Heart right ventricle (tissue), 16 donors: ENCODE measurements at regions of chr11 and their contacts with region 1.

Region 1: DNA sequence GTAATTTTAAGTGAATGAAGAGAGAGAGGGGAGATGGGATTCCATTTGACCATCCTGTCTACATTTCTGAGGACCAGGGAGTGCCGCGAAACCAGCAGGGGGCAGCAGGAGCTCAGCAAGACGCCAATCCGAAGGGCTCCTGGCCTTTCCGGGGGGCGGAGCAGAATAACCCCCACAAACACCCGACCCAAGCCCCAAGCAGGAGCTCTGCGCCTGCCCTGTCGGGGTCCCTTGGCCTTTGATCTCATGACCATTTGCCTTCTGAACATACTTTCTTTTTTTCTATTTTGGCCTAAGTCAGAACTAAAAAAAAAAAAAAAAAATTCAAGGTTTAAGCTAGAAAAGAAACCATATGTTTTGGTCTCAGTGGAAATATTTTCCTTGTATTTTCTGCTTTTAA is 21.9 kb upstream of the SCN2B start:
- DNase-seq: peak; percentile 83 to 86
- ATAC-seq: peak; percentile 44 to 69 (median 61)
- H3K4me3 ChIP-seq: peak overlapping the region in 2 of 10 donors; percentile 16 to 26
- H3K27ac ChIP-seq: peak overlapping the region in 6 of 10 donors; percentile 18 to 50 (median 26)
- H3K4me1 ChIP-seq: peaks cover 8 to 44% (median 26%) of the 10 kb centered on the region in 9 donors
- H3K27me3 ChIP-seq: no peaks in the 10 kb centered on the region
- CTCF ChIP-seq: peak; percentile 80 to 93 (median 90)

Region 2: DNA sequence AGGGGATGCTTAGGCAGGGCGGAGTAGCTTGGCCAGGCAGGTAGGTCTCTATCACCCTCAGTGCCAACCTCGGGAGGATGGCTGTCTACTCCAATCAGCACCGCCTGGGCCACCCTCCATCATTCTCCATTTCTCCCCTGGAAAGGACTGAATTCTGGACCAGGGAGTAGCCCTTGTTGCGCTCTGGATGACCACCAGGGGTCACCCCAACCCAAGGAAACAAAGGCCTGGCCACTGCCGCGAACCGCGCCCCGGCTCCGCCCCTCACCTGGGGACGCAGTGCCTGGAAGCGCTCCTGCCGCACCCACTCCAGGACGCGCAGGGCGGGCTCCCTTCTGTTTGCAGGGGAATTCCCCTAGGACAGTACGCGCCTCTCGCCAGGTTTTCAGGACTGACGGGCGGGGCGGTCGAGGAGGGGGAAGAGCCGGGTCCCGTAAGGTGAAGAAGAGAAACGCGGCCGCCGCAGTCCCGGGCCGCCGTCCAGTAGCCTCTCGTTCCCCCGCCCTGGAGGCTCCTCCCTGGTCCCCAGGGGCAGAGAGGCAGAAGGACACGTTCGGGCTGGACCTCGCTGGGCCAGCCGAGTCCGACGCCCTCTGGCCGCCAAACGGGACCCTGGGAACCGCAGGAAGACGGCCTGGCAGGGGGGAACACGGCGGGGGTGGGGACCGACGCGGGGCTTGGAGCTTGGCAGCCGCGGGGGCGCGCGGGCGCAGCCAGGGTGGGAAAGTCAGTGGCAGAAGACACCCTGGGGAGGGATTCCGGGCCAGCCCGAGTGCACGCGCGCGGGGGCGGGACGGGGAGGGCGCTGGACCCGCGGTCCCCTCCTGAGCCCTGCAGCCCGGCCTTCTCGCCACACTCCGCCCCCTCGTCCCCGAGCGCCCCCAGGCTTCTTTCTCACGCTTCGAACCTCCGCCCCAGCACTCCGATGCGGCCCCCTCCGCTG is 52.8 kb before region 1 on chr11:
- intact Hi-C with region 1: loop called in 1 of 10 experiments (anchors 2 kb)
- DNase-seq: peak; percentile 83 to 85
- ATAC-seq: peak; percentile 83 to 94 (median 88)
- H3K4me3 ChIP-seq: peak overlapping the region; percentile 39 to 70 (median 62)
- H3K27ac ChIP-seq: peak overlapping the region in 9 of 10 donors; percentile 35 to 84 (median 71)
- H3K4me1 ChIP-seq: peaks cover 0 to 58% (median 30%) of the 10 kb centered on the region in 9 donors
- H3K27me3 ChIP-seq: peaks cover 0 to 33% (median 4%) of the 10 kb centered on the region in 7 donors
- CTCF ChIP-seq: peak; percentile 79 to 95 (median 94)

Region 3: GRCh38 chr11:118251858-118252652 is 53.7 kb after region 1 on chr11 and contains the start of gene MPZL3:
- intact Hi-C with region 1: loop called in 2 of 10 experiments (anchors 5 kb)
- DNase-seq: peak; percentile 47 to 77
- ATAC-seq: peak; percentile 61 to 90 (median 82)
- H3K4me3 ChIP-seq: peak within 1 kb of the TSS; percentile 44 to 89 (median 66)
- H3K27ac ChIP-seq: peak within 1 kb of the TSS in 9 of 10 donors; percentile 60 to 94 (median 73)
- H3K4me1 ChIP-seq: peaks cover 0 to 28% (median 0%) of the 10 kb centered on the region in 9 donors
- H3K27me3 ChIP-seq: peaks cover 0 to 20% (median 0%) of the 10 kb centered on the region in 7 donors
- CTCF ChIP-seq: no peak
- total RNA-seq, gene MPZL3: 1.9 to 4.2 (median 2.7) TPM

Region 4: GRCh38 chr11:118290923-118291322 is 92.6 kb after region 1 on chr11:
- intact Hi-C with region 1: loop called in 9 of 10 experiments (anchors 1 to 5 kb)
- DNase-seq: peak in 1 of 2 donors; percentile 22
- ATAC-seq: peak; percentile 55 to 83 (median 78)
- H3K4me3 ChIP-seq: peak overlapping the region in 1 of 10 donors; percentile 8
- H3K27ac ChIP-seq: no peak overlapping the region
- H3K4me1 ChIP-seq: no peaks in the 10 kb centered on the region
- H3K27me3 ChIP-seq: peaks cover 0 to 6% (median 0%) of the 10 kb centered on the region in 7 donors
- CTCF ChIP-seq: peak in 8 of 9 donors; percentile 11 to 64 (median 55)

Region 5: GRCh38 chr11:118359295-118359958 is 161.1 kb after region 1 on chr11 and contains the start of gene UBE4A:
- intact Hi-C with region 1: loop called in 5 of 10 experiments (anchors 2 to 5 kb)
- DNase-seq: peak; percentile 95 to 96
- ATAC-seq: peak; percentile 93 to 99 (median 97)
- H3K4me3 ChIP-seq: peak within 1 kb of the TSS; percentile 66 to 96 (median 78)
- H3K27ac ChIP-seq: peak within 1 kb of the TSS in 9 of 10 donors; percentile 14 to 82 (median 61)
- H3K4me1 ChIP-seq: peaks cover 7 to 29% (median 24%) of the 10 kb centered on the region in 9 donors
- H3K27me3 ChIP-seq: no peaks in the 10 kb centered on the region
- CTCF ChIP-seq: no peak
- total RNA-seq, gene UBE4A: 38.4 to 46.4 (median 42.3) TPM

Region 6: DNA sequence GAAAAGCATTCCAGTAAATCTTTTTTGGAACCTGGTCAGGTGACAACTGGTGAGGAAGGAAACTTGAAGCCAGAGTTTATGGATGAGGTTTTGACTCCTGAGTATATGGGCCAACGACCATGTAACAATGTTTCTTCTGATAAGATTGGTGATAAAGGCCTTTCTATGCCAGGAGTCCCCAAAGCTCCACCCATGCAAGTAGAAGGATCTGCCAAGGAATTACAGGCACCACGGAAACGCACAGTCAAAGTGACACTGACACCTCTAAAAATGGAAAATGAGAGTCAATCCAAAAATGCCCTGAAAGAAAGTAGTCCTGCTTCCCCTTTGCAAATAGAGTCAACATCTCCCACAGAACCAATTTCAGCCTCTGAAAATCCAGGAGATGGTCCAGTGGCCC is 304.8 kb after region 1 on chr11:
- intact Hi-C with region 1: loop called in 1 of 10 experiments (anchors 10 kb)
- DNase-seq: no peak
- ATAC-seq: peak in 6 of 8 donors; percentile 16 to 65 (median 40)
- H3K4me3 ChIP-seq: no peak overlapping the region
- H3K27ac ChIP-seq: peak overlapping the region in 4 of 10 donors; percentile 19 to 45 (median 28)
- H3K4me1 ChIP-seq: peaks cover 0 to 6% (median 0%) of the 10 kb centered on the region in 9 donors
- H3K27me3 ChIP-seq: no peaks in the 10 kb centered on the region
- CTCF ChIP-seq: no peak